Activated CD4-positive, alpha-beta T cell treated with anti-CD3 and anti-CD28 coated beads, Interleukin-2, amount 10 ng/mL, durations not matched to agents 24 days and 14 days (primary cell): ENCODE measurements at regions of chr14 and their contacts with region 1.

Region 1: DNA sequence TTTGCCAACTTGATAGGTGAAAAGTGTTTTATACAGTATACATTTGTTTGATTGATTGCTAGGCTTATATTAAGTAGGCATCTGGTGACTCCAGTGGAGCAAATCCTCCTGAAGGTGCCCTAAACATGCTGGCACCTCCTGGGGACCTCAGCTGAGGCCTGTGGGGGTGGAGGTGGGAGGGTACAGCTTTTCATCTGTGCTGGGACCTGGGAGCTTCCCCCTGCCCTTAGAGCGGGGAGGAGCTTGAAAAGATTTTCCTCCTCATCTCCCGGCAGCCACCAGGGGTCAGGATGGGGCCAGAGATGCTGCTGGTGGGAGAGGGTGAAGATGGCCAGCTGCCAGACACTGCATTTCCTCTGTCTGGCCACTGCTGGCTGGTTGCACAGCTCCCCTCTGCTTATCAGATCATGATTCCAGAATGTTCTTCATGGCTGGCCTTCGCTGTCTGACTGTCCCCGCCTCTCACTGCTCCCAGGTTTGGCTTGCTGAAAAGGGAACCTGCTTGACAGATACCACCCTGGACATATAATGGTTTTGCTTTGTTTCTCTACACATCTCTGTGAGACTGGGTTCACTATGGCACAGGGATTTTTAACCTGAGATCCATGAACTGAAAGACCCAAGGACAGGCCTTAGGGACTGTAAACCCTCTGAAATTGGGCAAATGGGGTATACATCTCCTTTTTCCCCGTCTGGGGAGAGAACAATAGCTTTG is 10.5 kb upstream of the JPH4 start:
- DNase-seq: peak; percentile 92
- H3K4me3 Mint-ChIP-seq: no peak overlapping the region
- H3K27ac Mint-ChIP-seq: no peak overlapping the region
- H3K4me1 Mint-ChIP-seq: peaks cover 6% of the 10 kb centered on the region
- H3K27me3 Mint-ChIP-seq: peaks cover 21% of the 10 kb centered on the region

Region 2: DNA sequence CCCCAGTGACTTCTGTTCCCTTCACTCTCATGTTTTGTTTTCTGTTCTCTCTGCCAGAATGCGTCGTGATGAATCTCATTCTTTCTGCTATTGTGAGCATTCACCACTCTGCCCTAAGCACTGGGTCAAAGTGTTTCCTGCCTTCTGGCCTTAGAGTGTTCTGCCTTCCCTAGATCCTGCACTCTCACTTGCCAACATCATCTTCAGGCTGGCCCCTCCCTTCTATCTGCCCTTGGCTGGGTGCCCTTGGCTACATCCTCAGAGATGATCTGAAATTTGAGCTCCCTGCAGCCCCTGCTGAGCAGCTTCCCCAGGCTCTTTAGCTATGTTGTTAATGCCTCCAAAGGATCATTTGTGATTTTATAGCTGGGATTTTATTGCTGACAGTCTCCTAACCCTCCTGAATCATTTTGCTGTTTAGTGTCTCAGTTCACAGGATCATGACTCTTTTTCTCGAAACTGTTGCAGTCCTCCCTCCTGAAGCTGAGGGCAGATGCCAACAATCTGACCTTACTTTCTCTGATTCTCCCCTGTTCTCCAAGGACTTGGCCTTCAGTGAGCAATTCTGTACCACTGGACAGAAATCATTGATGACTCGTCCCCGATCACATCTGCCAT is 51.6 kb after region 1 on chr14:
- intact Hi-C with region 1: no loop called
- DNase-seq: no peak
- H3K4me3 Mint-ChIP-seq: no peak overlapping the region
- H3K27ac Mint-ChIP-seq: no peak overlapping the region
- H3K4me1 Mint-ChIP-seq: no peaks in the 10 kb centered on the region
- H3K27me3 Mint-ChIP-seq: no peaks in the 10 kb centered on the region

Region 3: GRCh38 chr14:23929822-23930294 is 340.8 kb after region 1 on chr14:
- intact Hi-C with region 1: loop called (anchors 1 kb)
- DNase-seq: peak; percentile 94
- H3K4me3 Mint-ChIP-seq: no peak overlapping the region
- H3K27ac Mint-ChIP-seq: no peak overlapping the region
- H3K4me1 Mint-ChIP-seq: no peaks in the 10 kb centered on the region
- H3K27me3 Mint-ChIP-seq: peaks cover 3% of the 10 kb centered on the region